HepG2 (cell line): ENCODE measurements at regions of chr14 and their contacts with region 1.

Region 1: DNA sequence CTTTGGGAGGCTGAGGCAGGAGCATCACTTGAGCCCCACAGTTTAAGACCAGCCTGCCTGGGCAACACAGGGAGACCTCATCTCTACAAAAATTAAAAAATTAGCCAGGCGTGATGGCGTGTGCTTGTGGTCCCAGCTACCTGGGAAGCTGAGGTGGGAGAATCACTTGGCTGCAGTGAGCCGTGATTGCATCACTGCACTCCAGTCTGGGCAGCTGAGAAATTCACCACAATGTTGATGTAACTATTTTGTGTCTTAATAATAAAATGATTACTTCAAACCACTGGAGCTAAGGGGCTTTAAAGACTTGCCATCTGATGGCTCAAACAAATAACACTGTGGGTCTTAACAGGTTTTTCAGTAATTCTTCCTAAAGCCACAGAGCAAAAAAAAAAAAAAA is 10.8 kb downstream of the ERH start:
- DNase-seq: no peak
- ATAC-seq: no peak
- H3K4me3 ChIP-seq: no peak overlapping the region
- H3K27ac ChIP-seq: no peak overlapping the region
- H3K4me1 ChIP-seq: peaks cover 24% of the 10 kb centered on the region
- H3K27me3 ChIP-seq: no peaks in the 10 kb centered on the region
- CTCF ChIP-seq: no peak
- EP300 ChIP-seq: no peak
- POLR2A ChIP-seq: no peak
- RAD21 ChIP-seq: no peak

Region 2: DNA sequence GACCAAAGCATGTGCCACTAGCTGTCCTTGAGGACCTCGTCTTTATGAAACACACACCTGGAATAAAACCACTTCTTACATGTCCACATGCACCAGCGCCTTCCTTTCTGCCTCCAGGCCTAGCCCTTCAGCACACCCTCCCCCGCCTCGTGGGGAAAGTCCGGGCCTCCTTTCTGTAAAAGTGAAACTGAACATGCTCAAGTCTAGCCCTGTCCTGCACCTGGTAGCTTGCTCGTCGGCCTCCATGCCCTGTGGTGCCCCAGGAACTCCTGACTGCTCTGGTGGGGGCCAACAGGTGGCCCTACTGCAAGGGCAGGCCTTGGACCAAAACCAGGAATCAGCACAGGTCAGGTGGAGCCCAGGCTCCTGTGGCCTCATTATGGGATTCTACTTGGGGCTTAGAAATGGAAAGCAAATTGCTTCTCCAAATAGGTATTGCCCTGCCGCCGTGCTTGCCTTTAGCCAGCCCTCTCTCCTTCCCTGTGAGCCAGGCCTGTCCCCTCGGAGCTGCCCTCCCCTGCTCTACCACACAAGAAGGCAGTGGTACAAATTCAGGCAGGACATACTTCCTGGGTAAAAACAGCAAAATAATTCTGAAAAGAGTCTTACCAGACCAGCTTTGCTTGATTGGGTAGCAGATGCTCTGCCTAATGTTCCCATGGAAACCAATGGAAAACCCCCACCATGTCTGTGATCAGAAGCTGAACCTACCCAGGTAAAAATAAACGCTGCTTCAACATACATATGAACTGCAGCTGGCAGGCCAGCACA is 32.7 kb before region 1 on chr14:
- CTCF ChIA-PET with region 1: no interaction called
- POLR2A ChIA-PET with region 1: no interaction called
- in situ Hi-C with region 1: no loop called
- intact Hi-C with region 1: loop called (anchors 1 kb)
- DNase-seq: peak; percentile 16
- ATAC-seq: peak; percentile 68
- H3K4me3 ChIP-seq: peak overlapping the region; percentile 50 to 68 (median 56)
- H3K27ac ChIP-seq: no peak overlapping the region
- H3K4me1 ChIP-seq: peaks cover 30% of the 10 kb centered on the region
- H3K27me3 ChIP-seq: peaks cover 1 to 24% of the 10 kb centered on the region in 2 experiments; a peak in 2 of 5 replicates
- CTCF ChIP-seq: no peak
- EP300 ChIP-seq: no peak
- POLR2A ChIP-seq: no peak
- RAD21 ChIP-seq: no peak

Region 3: GRCh38 chr14:69972755-69973154 is 585.4 kb after region 1 on chr14:
- CTCF ChIA-PET with region 1: no interaction called
- POLR2A ChIA-PET with region 1: no interaction called
- in situ Hi-C with region 1: no loop called
- intact Hi-C with region 1: no loop called
- DNase-seq: no peak
- ATAC-seq: no peak
- H3K4me3 ChIP-seq: no peak overlapping the region
- H3K27ac ChIP-seq: no peak overlapping the region
- H3K4me1 ChIP-seq: no peaks in the 10 kb centered on the region
- H3K27me3 ChIP-seq: no peaks in the 10 kb centered on the region
- CTCF ChIP-seq: no peak
- EP300 ChIP-seq: no peak
- POLR2A ChIP-seq: no peak
- RAD21 ChIP-seq: no peak